CD14-positive monocyte (primary cell): ENCODE measurements at regions of chr5 and their contacts with region 1.

Region 1: GRCh38 chr5:58886315-58887207 is 303.7 kb downstream of the RAB3C start:
- DNase-seq: peak; percentile 35 to 55 (median 38)
- H3K4me3 ChIP-seq: no peak overlapping the region
- H3K4me3 Mint-ChIP-seq: no peak overlapping the region
- H3K27ac ChIP-seq: no peak overlapping the region
- H3K27ac Mint-ChIP-seq: no peak overlapping the region
- H3K4me1 ChIP-seq: no peaks in the 10 kb centered on the region
- H3K4me1 Mint-ChIP-seq: peaks cover 10% of the 10 kb centered on the region
- H3K27me3 ChIP-seq: no peaks in the 10 kb centered on the region
- H3K27me3 Mint-ChIP-seq: peaks cover 0 to 2% (median 2%) of the 10 kb centered on the region in 3 donors
- CTCF ChIP-seq: peak; percentile 91

Region 2: GRCh38 chr5:58746321-58746720 is 140.2 kb before region 1 on chr5:
- intact Hi-C with region 1: no loop called
- DNase-seq: no peak
- H3K4me3 ChIP-seq: no peak overlapping the region
- H3K4me3 Mint-ChIP-seq: no peak overlapping the region
- H3K27ac ChIP-seq: no peak overlapping the region
- H3K27ac Mint-ChIP-seq: no peak overlapping the region
- H3K4me1 ChIP-seq: peaks cover 2% of the 10 kb centered on the region in 2 donors
- H3K4me1 Mint-ChIP-seq: peaks cover 2% of the 10 kb centered on the region
- H3K27me3 ChIP-seq: no peaks in the 10 kb centered on the region
- H3K27me3 Mint-ChIP-seq: peaks cover 0 to 3% (median 0%) of the 10 kb centered on the region in 3 donors
- CTCF ChIP-seq: no peak

Region 3: DNA sequence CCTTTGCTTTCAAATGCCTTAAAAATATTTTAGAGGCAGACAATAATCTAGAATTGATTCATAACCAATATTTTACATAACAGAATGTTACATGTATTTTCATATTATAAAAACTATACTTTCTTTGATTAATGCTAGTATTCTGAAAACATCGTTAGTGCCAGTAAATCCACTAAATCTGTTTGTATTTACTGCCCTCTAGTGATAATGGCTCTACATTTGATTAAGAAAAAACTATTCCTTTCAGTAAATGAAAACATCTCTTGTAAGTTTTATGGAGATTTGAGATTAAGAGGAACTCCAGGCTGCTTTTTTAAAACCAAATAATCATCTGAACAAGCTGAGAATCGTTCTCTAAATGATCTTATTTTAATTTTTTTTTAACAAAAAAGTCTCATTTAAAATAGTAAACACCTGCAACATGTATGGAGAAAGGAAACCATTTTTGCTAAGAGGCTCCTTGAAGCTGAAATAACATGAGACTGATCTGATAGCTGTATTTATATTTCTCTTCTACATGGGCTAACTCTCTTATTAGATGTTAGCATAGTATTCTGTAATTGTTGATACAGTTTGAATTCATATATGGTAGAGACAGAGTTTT is 121.0 kb after region 1 on chr5:
- intact Hi-C with region 1: loop called (anchors 5 to 10 kb)
- DNase-seq: peak in 1 of 3 donors; percentile 5
- H3K4me3 ChIP-seq: no peak overlapping the region
- H3K4me3 Mint-ChIP-seq: no peak overlapping the region
- H3K27ac ChIP-seq: no peak overlapping the region
- H3K27ac Mint-ChIP-seq: no peak overlapping the region
- H3K4me1 ChIP-seq: no peaks in the 10 kb centered on the region
- H3K4me1 Mint-ChIP-seq: peaks cover 9% of the 10 kb centered on the region
- H3K27me3 ChIP-seq: no peaks in the 10 kb centered on the region
- H3K27me3 Mint-ChIP-seq: no peaks in the 10 kb centered on the region
- CTCF ChIP-seq: peak; percentile 49

Region 4: DNA sequence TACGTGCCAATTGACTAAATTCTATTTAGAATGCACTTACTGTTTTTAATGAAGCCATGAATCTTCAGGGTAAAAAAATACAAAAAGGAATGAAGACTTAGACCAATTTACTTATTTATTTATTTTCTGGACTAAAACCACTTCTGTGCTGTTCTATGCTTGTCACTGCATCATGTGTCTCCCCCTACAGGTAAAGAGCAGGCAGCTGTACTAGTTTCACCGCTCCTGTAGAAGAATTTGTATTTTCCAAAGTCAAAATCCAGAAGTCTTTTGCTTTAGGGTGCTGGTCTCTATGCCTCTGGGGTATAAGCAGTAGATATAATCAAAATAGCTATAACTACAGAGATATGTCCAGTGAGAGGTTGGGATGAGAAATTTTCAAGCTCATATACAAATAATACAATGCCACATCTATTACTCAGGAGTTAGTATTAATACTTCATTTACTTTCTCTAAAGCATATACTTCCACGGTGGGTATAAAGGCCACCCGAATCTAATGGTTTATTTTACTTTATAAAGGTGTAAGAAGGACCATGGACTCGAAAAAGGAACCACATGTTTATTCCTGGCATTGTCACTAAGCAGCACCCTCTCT is 287.8 kb after region 1 on chr5:
- intact Hi-C with region 1: loop called (anchors 5 to 10 kb)
- DNase-seq: peak in 2 of 3 donors; percentile 30 to 37
- H3K4me3 ChIP-seq: no peak overlapping the region
- H3K4me3 Mint-ChIP-seq: no peak overlapping the region
- H3K27ac ChIP-seq: no peak overlapping the region
- H3K27ac Mint-ChIP-seq: no peak overlapping the region
- H3K4me1 ChIP-seq: peaks cover 6 to 8% of the 10 kb centered on the region in 2 donors
- H3K4me1 Mint-ChIP-seq: peaks cover 11% of the 10 kb centered on the region
- H3K27me3 ChIP-seq: no peaks in the 10 kb centered on the region
- H3K27me3 Mint-ChIP-seq: peaks cover 0 to 2% (median 0%) of the 10 kb centered on the region in 3 donors
- CTCF ChIP-seq: peak; percentile 69